ENCODE measurements at regions of chr12 and their contacts with region 1.

Region 1: DNA sequence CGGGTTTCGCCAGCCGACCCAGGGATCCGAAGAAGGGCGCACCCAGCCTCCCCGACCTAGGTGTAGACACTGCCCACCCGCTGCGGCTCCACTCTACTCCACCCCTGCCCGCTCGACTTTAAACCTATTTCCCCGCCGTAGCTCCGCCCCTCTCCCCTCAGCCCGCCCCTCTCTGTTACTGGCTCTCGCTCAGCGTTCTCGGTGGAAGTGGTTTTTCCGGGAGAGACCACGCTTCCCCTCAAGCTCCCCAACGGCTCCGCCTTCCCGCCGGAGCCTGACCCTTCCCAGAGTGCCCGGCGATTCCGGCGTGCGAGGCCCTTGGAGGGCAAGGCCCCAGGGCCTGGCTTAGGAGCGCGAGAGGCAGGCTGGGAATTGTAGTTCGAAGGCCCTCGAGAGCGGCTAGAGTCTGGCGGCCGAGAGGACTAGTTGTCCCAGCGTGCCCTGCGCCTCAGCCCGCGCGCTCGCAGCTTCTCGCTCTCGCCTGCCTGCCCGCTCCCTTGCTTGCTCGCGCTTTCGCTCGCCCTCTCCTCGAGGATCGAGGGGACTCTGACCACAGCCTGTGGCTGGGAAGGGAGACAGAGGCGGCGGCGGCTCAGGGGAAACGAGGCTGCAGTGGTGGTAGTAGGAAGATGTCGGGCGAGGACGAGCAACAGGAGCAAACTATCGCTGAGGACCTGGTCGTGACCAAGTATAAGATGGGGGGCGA is at the start of gene PA2G4:
- DNase-seq: peak; percentile 97
- CTCF ChIP-seq: no peak

Region 2: DNA sequence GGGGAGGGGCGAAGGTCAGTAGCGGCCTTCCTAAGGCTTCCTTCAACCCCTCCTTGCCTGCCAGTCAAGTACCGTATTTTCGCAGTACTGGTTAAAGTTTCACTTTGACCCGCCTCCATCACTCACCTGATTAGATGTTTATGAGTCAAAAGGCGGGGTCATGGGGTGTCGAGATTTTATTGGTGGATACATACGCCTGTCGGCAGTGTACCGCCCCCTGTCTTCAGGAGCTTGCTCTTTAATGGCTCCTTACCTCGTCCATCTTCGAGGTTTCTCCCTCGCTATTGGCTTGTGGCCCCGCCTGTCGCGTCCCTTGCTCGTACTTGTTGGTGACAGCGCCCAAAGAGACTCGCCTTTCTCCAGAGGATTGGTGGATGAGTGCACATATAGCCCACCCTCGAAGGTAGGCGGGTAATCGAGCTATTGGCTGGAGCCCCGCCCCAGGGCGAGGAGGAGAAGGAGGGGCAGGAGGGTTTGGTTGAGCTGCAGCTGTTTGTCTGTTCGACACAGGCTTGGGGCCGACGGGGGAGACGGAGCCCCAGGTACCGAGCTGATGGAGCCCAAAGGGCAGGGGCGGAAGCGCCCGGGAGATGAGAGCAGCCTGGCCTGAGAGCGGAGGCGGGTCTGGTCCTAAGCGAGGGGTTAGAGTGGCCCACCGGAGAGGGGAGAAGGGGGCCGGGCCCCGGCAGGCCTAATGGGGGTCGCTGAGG is 130.5 kb before region 1 on chr12 and contains the start of gene RAB5B:
- CTCF ChIA-PET with region 1: interaction called, 4 read pairs
- POLR2A ChIA-PET with region 1: interaction called, 11 read pairs
- DNase-seq: peak; percentile 94
- CTCF ChIP-seq: no peak

Region 3: GRCh38 chr12:56078990-56079664 is 25.1 kb before region 1 on chr12:
- CTCF ChIA-PET with region 1: interaction called, 11 read pairs
- POLR2A ChIA-PET with region 1: interaction called, 5 read pairs
- DNase-seq: peak; percentile 79
- CTCF ChIP-seq: peak; percentile 55

Region 4: GRCh38 chr12:56087220-56087619 is 17.0 kb before region 1 on chr12:
- CTCF ChIA-PET with region 1: interaction called, 4 read pairs
- POLR2A ChIA-PET with region 1: interaction called, 10 read pairs
- DNase-seq: no peak
- CTCF ChIP-seq: no peak

Region 5: GRCh38 chr12:56117778-56118687 is 13.8 kb after region 1 on chr12 and contains the start of gene ZC3H10:
- CTCF ChIA-PET with region 1: interaction called, 42 read pairs
- POLR2A ChIA-PET with region 1: interaction called, 56 read pairs
- DNase-seq: peak; percentile 93
- CTCF ChIP-seq: peak; percentile 62

Region 6: GRCh38 chr12:56127888-56128669 is 23.8 kb after region 1 on chr12 and contains the start of gene ESYT1:
- CTCF ChIA-PET with region 1: interaction called, 4 read pairs
- POLR2A ChIA-PET with region 1: interaction called, 11 read pairs
- DNase-seq: peak; percentile 97
- CTCF ChIP-seq: no peak